ENCODE measurements at regions of chr2 and their contacts with region 1.

Region 1: DNA sequence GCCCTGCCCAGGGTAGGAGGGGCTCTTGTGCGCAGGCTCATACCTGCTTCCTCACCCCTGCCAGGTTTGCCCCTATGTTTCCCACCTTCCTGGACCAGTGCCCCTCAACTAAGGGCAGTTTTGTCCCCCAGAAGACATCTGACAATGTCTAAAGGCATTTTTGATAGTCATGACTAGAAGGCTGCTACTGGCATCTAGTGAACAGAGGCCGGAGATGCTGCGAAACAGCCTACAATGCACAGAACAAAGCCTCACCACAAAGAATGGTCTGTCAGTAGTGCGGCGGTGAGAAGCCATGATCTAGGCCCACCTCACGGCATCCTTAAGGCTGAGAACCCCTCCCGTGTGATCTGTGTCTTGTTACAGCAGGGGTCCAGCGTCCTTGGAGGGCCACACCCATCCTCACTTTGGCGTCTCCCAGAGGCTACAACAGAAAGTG is 96.0 kb downstream of the TMEM17 start:
- DNase-seq: no peak
- H3K4me3 ChIP-seq: no peak overlapping the region
- H3K27ac ChIP-seq: peak overlapping the region; percentile 84
- H3K4me1 ChIP-seq: peaks cover 43% of the 10 kb centered on the region
- H3K27me3 ChIP-seq: no peaks in the 10 kb centered on the region
- CTCF ChIP-seq: peak; percentile 53

Region 2: GRCh38 chr2:61993444-61994024 is 416.5 kb before region 1 on chr2:
- intact Hi-C with region 1: loop called (anchors 5 kb)
- DNase-seq: no peak
- H3K4me3 ChIP-seq: no peak overlapping the region
- H3K27ac ChIP-seq: no peak overlapping the region
- H3K4me1 ChIP-seq: peaks cover 26% of the 10 kb centered on the region
- H3K27me3 ChIP-seq: no peaks in the 10 kb centered on the region
- CTCF ChIP-seq: peak; percentile 79

Region 3: GRCh38 chr2:62195421-62196277 is 214.4 kb before region 1 on chr2 and contains the start of gene B3GNT2:
- intact Hi-C with region 1: loop called (anchors 10 kb)
- DNase-seq: peak; percentile 88
- H3K4me3 ChIP-seq: peak within 1 kb of the TSS; percentile 97
- H3K27ac ChIP-seq: peak within 1 kb of the TSS; percentile 96
- H3K4me1 ChIP-seq: peaks cover 57% of the 10 kb centered on the region
- H3K27me3 ChIP-seq: no peaks in the 10 kb centered on the region
- CTCF ChIP-seq: no peak
- total RNA-seq, gene B3GNT2: 16.8 TPM

Measured in left ventricle myocardium inferior (tissue), 1 donor.